Activated CD4-positive, alpha-beta T cell treated with anti-CD3 and anti-CD28 coated beads, Interleukin-2, amount 10 ng/mL, durations not matched to agents 24 days and 14 days (primary cell): ENCODE measurements at regions of chr3 and their contacts with region 1.

Region 1: GRCh38 chr3:51498876-51499738 is 708 bp downstream of the DCAF1 start:
- DNase-seq: peak; percentile 97
- H3K4me3 Mint-ChIP-seq: peak overlapping the region; percentile 93
- H3K27ac Mint-ChIP-seq: peak overlapping the region; percentile 97
- H3K4me1 Mint-ChIP-seq: peaks cover 17% of the 10 kb centered on the region
- H3K27me3 Mint-ChIP-seq: peaks cover 2% of the 10 kb centered on the region

Region 2: GRCh38 chr3:51384726-51385473 is 114.2 kb before region 1 on chr3 and contains the start of gene MANF:
- intact Hi-C with region 1: loop called (anchors 1 kb)
- DNase-seq: peak; percentile 99
- H3K4me3 Mint-ChIP-seq: peak within 1 kb of the TSS; percentile 95
- H3K27ac Mint-ChIP-seq: peak within 1 kb of the TSS; percentile 99
- H3K4me1 Mint-ChIP-seq: peaks cover 40% of the 10 kb centered on the region
- H3K27me3 Mint-ChIP-seq: no peaks in the 10 kb centered on the region
- total RNA-seq, gene MANF: 218 and 229 TPM in 2 replicates

Region 3: DNA sequence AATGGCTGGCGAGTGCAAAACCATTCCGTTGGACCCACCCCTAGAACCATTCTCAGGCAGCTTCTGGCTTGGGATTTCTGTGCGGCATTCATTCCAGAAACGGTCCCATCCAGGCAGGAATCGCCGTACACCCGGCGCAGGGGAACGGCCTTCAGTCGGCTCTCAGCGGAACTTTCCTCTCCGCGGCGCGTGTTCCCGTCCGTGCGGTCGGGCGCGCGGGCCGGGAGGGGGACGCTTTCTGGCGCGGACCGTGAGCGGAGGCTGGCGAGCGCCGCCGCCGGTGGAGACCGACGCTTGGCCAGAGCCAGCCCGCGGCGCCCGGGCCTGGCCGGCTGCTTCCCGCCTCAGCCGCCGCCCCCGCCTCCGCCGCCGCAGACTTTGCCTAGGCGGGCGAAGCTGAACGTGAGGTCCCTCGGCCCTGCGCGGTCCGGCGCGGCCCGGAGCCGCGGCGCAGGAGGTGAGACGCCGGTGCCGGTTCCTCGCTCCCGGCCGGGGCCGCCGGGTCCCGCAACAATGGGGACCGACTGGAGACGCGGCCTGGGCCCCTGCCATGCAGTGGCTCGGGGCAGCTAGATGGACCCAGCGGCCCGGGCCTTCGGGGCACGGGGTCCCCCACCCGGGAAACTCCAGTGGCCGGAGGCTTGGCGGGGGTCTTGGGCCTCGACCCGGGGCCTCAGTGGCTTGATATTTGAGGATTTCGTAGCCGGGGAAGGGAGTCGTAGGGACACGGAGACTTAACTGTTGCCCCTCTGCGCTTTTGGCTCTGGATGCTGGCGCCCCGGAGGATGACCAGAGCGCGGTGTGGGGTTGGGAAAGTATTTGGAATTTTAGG is 39.6 kb after region 1 on chr3 and contains the start of gene RAD54L2:
- intact Hi-C with region 1: loop called (anchors 2 kb)
- DNase-seq: peak; percentile 94
- H3K4me3 Mint-ChIP-seq: peak within 1 kb of the TSS; percentile 82
- H3K27ac Mint-ChIP-seq: peak within 1 kb of the TSS; percentile 93
- H3K4me1 Mint-ChIP-seq: peaks cover 25% of the 10 kb centered on the region
- H3K27me3 Mint-ChIP-seq: no peaks in the 10 kb centered on the region
- total RNA-seq, gene RAD54L2: 43.0 and 44.0 TPM in 2 replicates

Region 4: GRCh38 chr3:51670823-51671733 is 172.0 kb after region 1 on chr3 and contains the start of gene TEX264:
- intact Hi-C with region 1: loop called (anchors 1 kb)
- DNase-seq: peak; percentile 99
- H3K4me3 Mint-ChIP-seq: peak within 1 kb of the TSS; percentile 93
- H3K27ac Mint-ChIP-seq: peak within 1 kb of the TSS; percentile 93
- H3K4me1 Mint-ChIP-seq: peaks cover 61% of the 10 kb centered on the region
- H3K27me3 Mint-ChIP-seq: no peaks in the 10 kb centered on the region
- total RNA-seq, gene TEX264: 45.6 and 47.0 TPM in 2 replicates

Region 5: GRCh38 chr3:51799879-51800749 is 301.0 kb after region 1 on chr3:
- intact Hi-C with region 1: loop called (anchors 2 kb)
- DNase-seq: peak; percentile 86
- H3K4me3 Mint-ChIP-seq: no peak overlapping the region
- H3K27ac Mint-ChIP-seq: no peak overlapping the region
- H3K4me1 Mint-ChIP-seq: peaks cover 42% of the 10 kb centered on the region
- H3K27me3 Mint-ChIP-seq: peaks cover 9% of the 10 kb centered on the region